Breast epithelium (tissue), 4 donors: ENCODE measurements at regions of chr6 and their contacts with region 1.

Region 1: DNA sequence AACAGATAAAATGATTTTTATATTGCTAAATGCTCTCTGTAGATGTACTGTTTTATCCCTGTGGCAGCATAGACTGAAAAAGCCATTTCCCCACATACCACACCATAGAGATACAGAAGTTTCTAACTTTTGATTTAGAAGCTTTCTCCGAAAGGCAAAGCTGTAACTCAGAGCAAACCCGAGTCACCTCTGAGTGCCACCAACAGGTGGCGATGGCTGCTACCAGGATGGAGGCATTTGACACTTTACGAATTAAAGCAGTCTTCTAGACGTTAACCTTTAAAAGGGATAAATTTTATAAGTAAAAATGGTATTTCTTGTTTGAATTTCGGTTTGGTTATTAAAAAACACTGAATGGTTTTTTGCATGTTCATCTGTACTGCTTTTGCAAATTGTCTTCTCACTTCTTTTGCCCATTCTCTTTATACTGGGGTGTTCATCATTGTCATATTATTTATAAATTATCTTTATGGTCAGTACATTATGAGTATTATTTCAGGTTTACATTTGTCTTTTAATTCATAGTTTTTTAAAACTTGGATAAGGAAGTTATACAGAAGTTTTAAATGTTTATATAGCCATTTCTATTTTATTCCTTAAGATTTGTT is 201.0 kb upstream of the CEP162 start:
- DNase-seq: no peak
- H3K4me3 ChIP-seq: no peak overlapping the region
- H3K27ac ChIP-seq: no peak overlapping the region
- H3K4me1 ChIP-seq: no peaks in the 10 kb centered on the region
- H3K27me3 ChIP-seq: peaks cover 0 to 3% of the 10 kb centered on the region in 2 donors
- CTCF ChIP-seq: peak in 2 of 3 donors; percentile 19 to 43
- POLR2A ChIP-seq: no peak

Region 2: GRCh38 chr6:83904395-83904794 is 524.0 kb before region 1 on chr6:
- intact Hi-C with region 1: no loop called
- DNase-seq: no peak
- H3K4me3 ChIP-seq: no peak overlapping the region
- H3K27ac ChIP-seq: no peak overlapping the region
- H3K4me1 ChIP-seq: no peaks in the 10 kb centered on the region
- H3K27me3 ChIP-seq: no peaks in the 10 kb centered on the region
- CTCF ChIP-seq: no peak
- POLR2A ChIP-seq: no peak

Region 3: DNA sequence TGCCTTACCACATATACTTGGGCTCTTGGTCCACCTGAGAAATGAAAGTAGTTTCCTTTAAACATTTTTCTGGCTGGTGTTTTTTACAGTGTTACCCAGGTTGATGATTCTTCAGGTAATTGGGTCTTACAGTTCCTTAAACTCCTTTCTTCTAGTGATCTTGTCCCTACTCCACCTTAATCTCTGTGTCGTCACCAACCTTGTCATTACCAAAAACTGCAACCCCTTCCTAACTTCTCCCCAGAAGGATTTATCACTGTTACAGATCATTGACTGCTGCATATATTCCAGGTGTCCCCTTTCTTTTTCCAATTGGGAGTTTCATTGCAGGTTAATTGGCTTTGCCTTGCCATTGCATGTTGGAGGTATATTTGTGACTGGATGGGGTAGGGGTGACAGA is 66.2 kb after region 1 on chr6:
- intact Hi-C with region 1: loop called (anchors 2 kb)
- DNase-seq: no peak
- H3K4me3 ChIP-seq: no peak overlapping the region
- H3K27ac ChIP-seq: no peak overlapping the region
- H3K4me1 ChIP-seq: no peaks in the 10 kb centered on the region
- H3K27me3 ChIP-seq: no peaks in the 10 kb centered on the region
- CTCF ChIP-seq: no peak
- POLR2A ChIP-seq: no peak

Region 4: DNA sequence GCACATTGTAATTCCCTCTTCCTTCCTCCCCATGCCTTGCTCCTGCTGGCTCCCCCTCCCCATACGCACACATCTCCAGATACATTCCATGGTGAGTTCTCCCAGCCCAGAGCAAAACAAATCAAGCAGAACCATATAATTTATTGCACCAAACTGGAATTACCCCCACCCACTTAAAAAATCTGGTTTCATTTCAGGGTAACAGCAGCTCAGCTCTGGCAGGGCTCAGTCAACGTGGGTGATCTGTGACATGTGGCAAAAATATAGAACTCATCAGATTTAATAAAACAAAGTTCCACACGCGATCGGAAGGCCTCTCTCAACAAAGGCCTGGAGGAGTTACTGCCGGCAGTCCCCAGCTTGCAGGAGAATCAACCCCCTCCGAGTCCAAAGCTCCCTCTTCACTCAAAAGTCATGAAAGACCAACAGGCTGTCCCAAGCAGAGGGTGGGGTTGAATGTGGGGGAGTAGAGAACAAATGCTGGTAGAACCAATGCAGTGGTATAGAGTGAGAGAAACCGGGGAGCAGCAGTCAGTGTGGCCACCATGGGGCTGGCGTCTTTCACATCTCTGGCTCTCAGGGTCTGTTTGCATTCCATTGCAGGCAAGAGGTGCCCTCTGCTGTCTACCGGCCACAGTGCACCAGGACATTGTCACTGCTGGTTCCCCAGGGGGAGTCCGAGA is 698.2 kb after region 1 on chr6:
- intact Hi-C with region 1: loop called (anchors 10 kb)
- DNase-seq: peak in 1 of 2 donors; percentile 19
- H3K4me3 ChIP-seq: peak overlapping the region in 1 of 3 donors; percentile 43
- H3K27ac ChIP-seq: peak overlapping the region in 1 of 2 donors; percentile 19
- H3K4me1 ChIP-seq: no peaks in the 10 kb centered on the region
- H3K27me3 ChIP-seq: no peaks in the 10 kb centered on the region
- CTCF ChIP-seq: peak in 2 of 3 donors; percentile 19 to 40
- POLR2A ChIP-seq: no peak